ENCODE measurements at regions of chr22 and their contacts with region 1.

Region 1: GRCh38 chr22:46328782-46329181 is 6.7 kb upstream of the TRMU start:
- DNase-seq: no peak
- CTCF ChIP-seq: no peak

Region 2: GRCh38 chr22:46122511-46122971 is 206.2 kb before region 1 on chr22:
- in situ Hi-C with region 1: loop called (anchors 5 kb)
- DNase-seq: peak; percentile 94
- CTCF ChIP-seq: peak; percentile 92

Region 3: GRCh38 chr22:46390652-46391301 is 62.0 kb after region 1 on chr22:
- in situ Hi-C with region 1: no loop called
- DNase-seq: no peak
- CTCF ChIP-seq: no peak

Measured in GM13976 (cell line).